Colonic mucosa (tissue), 4 donors: ENCODE measurements at regions of chr5 and their contacts with region 1.

Region 1: GRCh38 chr5:77143998-77144836 is 57.1 kb upstream of the ZBED3 start:
- DNase-seq: peak; percentile 74
- H3K4me3 ChIP-seq: no peak overlapping the region
- H3K27ac ChIP-seq: no peak overlapping the region
- H3K4me1 ChIP-seq: no peaks in the 10 kb centered on the region
- H3K27me3 ChIP-seq: no peaks in the 10 kb centered on the region
- CTCF ChIP-seq: peak; percentile 85

Region 2: DNA sequence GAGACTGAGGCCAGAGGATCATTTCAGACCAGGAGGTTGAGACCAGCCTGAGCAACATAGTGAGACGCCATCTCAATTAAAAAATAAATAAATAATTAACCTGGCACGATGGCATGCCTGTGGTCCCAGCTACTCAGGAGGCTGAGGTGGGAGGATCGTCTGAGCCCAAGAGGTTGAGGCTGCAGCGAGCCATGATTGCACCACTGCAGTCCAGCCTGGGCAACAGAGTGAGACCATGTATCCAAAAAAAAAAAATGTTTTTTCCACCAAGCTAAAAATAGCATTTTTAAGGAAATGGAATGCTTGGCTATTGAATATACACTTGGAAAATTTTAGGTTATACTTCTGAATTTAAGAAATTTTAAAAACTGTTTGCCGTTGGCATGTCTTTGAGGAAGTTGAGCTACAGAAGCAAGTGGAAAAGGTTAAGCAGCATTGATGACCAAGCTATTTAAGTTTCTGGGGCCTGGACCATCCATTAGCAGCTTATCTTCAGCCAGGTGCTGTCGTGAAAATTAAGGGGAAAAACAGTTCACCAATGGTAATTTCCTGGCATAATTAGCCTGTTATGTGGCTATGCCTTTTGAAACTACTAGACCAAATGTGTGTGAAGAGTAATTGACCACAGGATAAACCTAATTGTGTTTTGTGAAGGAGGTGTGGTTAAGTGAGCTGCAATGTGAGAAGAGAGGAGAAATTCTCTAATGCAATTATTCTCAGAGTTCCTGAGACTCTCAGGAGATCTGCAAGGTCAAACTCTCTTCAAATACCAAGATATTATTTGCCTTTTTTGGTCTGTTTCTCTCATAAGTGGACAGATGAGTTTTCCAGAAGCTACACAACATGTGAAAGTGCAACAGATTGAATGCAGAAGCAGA is 407.3 kb before region 1 on chr5:
- intact Hi-C with region 1: no loop called
- DNase-seq: no peak
- H3K4me3 ChIP-seq: no peak overlapping the region
- H3K27ac ChIP-seq: no peak overlapping the region
- H3K4me1 ChIP-seq: no peaks in the 10 kb centered on the region
- H3K27me3 ChIP-seq: no peaks in the 10 kb centered on the region
- CTCF ChIP-seq: no peak

Region 3: DNA sequence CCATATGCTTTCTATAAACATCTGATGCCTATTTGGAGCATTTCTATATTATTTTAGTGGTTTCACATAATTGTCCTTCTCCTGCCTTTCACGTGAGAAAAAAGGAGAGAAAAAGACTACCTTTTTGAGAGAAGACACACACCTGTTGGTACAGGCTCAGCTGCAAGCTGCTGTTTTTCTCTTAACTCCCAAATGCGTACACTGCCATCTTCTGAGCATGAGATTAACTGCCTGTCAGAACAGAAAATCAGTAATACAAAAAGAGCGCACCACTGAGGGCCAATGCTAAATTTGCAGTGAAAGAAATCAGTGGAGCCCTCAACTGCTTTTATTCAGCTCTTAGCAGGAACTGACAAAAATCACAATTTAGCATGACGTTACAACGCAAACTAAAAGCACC is 293.0 kb after region 1 on chr5:
- intact Hi-C with region 1: loop called (anchors 5 kb)
- DNase-seq: no peak
- H3K4me3 ChIP-seq: no peak overlapping the region
- H3K27ac ChIP-seq: no peak overlapping the region
- H3K4me1 ChIP-seq: no peaks in the 10 kb centered on the region
- H3K27me3 ChIP-seq: no peaks in the 10 kb centered on the region
- CTCF ChIP-seq: no peak

Region 4: DNA sequence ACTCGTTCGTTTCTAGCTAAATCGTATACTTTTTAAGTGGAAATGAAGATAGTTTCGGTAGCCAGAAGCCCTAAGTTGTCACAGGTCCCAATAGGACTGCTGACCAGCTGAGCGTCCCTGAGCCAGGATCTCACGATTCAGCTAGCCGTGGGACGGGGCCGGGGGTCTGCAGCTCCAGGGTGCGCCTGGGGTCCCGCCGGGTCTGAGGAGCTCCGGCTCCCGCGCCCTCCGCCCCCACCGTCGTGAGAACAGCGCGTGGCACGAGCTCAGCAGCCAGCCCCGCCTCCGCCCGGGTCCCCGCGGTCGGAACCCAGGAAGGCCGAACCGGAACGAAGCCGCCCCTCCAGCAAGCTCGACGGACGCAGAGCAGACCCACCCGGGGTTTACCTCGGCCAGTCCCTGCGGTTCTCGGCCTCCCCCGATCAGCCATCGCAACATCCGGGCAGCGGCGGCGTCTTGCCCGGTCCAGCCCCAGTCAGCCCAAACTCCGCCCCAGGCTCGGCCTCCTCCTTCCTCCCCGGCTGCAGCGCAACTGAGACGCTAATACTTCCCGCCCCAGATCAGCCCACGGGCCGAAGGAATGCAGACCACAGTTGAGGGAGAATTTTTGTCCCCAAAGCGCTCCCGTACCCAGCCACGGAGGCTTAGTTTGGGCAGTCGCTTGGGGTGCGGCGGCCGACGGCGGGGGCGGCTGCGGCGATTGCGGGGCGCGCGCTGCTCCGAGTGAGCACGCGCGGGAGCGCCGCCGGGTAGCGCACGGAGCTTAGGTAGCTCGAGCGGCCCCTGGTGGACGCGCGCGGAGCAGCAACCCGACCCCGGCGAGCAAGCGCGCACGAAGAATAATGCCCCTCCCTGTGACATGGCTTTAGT is 347.8 kb after region 1 on chr5 and contains the start of gene WDR41:
- intact Hi-C with region 1: loop called (anchors 2 kb)
- DNase-seq: peak; percentile 88
- H3K4me3 ChIP-seq: peak within 1 kb of the TSS; percentile 84
- H3K27ac ChIP-seq: peak within 1 kb of the TSS; percentile 92
- H3K4me1 ChIP-seq: no peaks in the 10 kb centered on the region
- H3K27me3 ChIP-seq: no peaks in the 10 kb centered on the region
- CTCF ChIP-seq: peak; percentile 96
- total RNA-seq, gene WDR41: 23.4 to 24.1 TPM